ENCODE measurements at regions of chr14 and their contacts with region 1.

Region 1: DNA sequence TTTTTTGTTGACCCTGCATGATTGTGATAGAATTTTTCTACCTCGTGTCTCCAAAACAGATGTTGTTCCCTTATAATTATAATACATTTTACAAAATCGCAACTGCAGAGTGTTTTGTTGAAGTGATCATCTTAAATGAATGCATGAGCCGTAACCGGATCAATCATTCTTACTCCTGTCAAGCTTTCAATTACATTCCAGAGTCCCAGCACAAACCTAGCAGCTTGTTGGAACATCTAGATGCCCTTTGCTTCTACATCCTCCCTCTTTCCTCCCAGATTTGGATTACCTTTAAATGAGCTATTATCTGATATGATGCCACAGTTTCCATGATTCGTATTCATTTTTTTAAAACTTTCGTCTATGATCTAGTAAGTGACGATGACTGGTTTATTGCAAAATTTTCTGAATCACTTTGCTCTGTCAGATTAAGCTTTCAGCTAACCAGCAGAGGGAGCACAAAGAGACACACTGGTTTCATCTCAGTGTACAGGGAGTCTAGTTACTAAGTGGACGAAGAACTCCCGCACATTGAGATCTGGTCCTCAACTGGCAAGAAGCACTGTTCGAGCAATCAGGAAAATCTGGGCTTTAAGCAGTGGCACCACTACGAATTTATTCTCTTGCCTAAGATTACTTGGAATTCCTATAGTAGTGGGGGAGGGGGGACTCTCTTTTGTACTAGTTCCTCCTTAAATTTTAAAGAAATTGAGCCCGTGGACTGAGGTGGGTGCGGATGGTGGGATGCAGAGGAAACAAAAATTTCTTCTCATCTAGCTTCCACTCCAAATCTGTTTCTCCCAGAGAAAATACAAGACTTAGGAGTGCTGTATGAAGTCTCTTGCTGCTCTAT is 40.9 kb downstream of the TSHR start:
- DNase-seq: peak; percentile 32
- ATAC-seq: peak; percentile 72
- H3K4me3 Mint-ChIP-seq: no peak overlapping the region
- H3K27ac Mint-ChIP-seq: no peak overlapping the region
- H3K4me1 Mint-ChIP-seq: no peaks in the 10 kb centered on the region
- H3K27me3 Mint-ChIP-seq: peaks cover 26% of the 10 kb centered on the region

Region 2: DNA sequence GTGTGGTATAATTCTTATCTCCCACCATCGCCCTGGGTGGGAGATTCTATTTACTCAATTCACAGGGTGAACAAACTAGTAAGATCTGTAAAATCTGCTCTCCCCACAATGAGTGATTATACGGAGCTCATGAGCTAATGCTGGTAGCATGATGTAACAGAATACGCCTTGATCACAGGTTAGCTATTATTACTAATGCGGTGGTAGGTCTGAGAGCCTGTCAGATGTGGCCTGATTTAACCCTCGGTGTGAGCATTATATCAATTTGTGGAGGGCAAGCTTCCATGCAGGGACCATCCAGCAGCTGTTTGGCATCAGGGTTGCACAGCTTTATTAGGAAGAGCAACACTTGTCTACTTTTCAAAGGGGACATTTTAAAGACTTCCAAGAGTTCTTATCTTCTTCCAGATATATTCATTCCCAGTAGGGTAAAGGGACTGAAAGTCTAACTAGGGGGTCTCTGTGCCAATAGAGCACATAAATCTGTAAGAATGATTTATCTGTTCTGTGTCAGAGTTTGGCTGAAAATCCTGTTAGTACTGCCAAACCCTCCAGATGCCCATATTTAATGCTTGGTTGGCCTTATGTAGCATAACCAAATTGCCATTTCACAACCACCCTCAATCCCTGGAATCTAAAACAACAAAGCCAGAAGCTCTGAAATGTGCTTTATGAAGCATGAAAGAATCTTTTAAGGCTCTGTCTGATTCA is 22.2 kb before region 1 on chr14:
- CTCF ChIA-PET with region 1: interaction called, 13 read pairs
- POLR2A ChIA-PET with region 1: no interaction called
- DNase-seq: no peak
- ATAC-seq: peak; percentile 35
- H3K4me3 Mint-ChIP-seq: no peak overlapping the region
- H3K27ac Mint-ChIP-seq: no peak overlapping the region
- H3K4me1 Mint-ChIP-seq: peaks cover 28% of the 10 kb centered on the region
- H3K27me3 Mint-ChIP-seq: peaks cover 33% of the 10 kb centered on the region

Region 3: DNA sequence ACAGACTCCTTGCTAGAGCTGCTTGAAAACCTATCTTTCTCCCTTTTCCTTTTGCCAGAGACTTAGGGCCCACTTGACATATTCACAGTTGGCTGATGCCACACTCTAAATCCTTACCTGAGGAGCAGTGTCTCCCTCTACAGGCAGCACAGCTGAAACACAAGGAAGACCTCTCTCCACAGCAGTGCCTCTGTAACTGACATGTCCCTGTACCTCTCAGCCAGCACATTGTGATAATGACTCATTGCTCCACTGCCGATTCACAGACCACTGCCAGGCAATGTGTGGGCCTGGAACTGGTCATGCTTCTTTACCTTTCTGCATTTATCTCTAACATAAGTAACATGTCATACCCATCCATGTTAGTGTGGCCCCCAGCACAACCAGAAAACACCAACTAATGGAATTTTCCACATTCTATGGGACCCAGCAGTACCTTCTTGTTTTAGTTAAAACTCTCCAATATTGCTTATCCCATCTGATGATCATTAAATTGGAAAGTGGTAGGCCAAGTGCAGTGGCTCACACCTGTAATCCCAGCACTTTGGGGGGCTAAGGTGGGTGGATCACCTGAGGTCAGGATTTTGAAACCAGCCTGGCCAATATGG is 168.0 kb after region 1 on chr14:
- CTCF ChIA-PET with region 1: interaction called, 34 read pairs
- POLR2A ChIA-PET with region 1: no interaction called
- DNase-seq: peak; percentile 69
- ATAC-seq: peak; percentile 92
- H3K4me3 Mint-ChIP-seq: no peak overlapping the region
- H3K27ac Mint-ChIP-seq: no peak overlapping the region
- H3K4me1 Mint-ChIP-seq: peaks cover 19% of the 10 kb centered on the region
- H3K27me3 Mint-ChIP-seq: no peaks in the 10 kb centered on the region

Measured in activated CD8-positive, alpha-beta T cell treated with anti-CD3 and anti-CD28 coated beads, Interleukin-2, amount 10 ng/mL, durations not matched to agents 7 days and 5 days (primary cell).